ENCODE measurements at regions of chr11 and their contacts with region 1.

Region 1: DNA sequence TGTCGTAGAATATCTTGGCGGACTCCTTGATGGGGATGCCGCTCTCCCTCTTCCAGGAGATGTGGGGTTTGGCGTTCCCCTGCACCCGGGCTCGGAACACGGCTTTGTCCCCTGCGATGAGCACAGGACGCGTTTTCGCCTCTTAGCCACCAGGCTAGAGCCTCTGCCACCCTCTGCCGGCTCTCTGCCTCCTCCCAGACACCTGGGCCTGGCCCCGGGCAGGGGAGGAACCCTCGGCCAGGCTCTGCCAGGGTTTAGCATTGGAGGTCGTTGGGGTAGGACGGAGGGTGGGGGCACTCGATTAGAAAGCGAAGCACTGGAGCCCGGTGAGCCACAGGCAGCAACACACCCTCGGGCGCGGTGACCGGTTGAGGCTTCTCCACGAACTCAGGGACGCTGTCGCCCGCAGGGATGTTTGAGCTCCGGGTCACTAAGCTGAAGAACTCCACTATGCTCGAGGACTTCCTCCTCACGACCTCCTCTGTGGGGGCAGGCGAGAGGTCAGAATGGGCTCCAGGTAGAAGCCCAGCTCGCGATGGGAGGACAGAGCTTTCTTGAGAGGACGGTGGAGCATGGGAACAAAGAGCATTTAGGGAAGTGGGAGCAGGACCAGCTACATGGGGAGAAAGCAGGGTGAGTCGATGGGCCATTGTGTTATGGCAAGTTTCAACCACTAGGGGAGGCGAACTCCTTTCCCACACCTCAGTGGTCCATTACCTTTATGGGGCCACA is 4.3 kb downstream of the IGSF22 start:
- DNase-seq: no peak
- ATAC-seq: peak; percentile 91
- H3K4me3 ChIP-seq: peak overlapping the region; percentile 71
- H3K27ac ChIP-seq: no peak overlapping the region
- H3K4me1 ChIP-seq: peaks cover 9% of the 10 kb centered on the region
- H3K27me3 ChIP-seq: no peaks in the 10 kb centered on the region; a peak in 3 of 4 replicates
- CTCF ChIP-seq: peak; percentile 78 to 92 (median 87)
- EP300 ChIP-seq: no peak
- POLR2A ChIP-seq: no peak
- RAD21 ChIP-seq: peak; percentile 35

Region 2: GRCh38 chr11:18634140-18635032 is 87.3 kb before region 1 on chr11 and contains the start of gene SPTY2D1:
- CTCF ChIA-PET with region 1: interaction called, 11 read pairs
- POLR2A ChIA-PET with region 1: no interaction called
- RAD21 ChIA-PET with region 1: interaction called, 9 read pairs
- SMC1A ChIA-PET with region 1: no interaction called
- in situ Hi-C with region 1: no loop called
- intact Hi-C with region 1: no loop called
- DNase-seq: peak; percentile 93
- ATAC-seq: peak; percentile 96
- H3K4me3 ChIP-seq: peak within 1 kb of the TSS; percentile 99
- H3K27ac ChIP-seq: peak within 1 kb of the TSS; percentile 89
- H3K4me1 ChIP-seq: peaks cover 7% of the 10 kb centered on the region
- H3K27me3 ChIP-seq: no peaks in the 10 kb centered on the region
- CTCF ChIP-seq: no peak
- EP300 ChIP-seq: no peak; a peak in 1 of 4 replicates
- POLR2A ChIP-seq: peak; percentile 97
- RAD21 ChIP-seq: no peak
- polyA plus RNA-seq, gene SPTY2D1: 4.6 to 4.7 TPM

Region 3: DNA sequence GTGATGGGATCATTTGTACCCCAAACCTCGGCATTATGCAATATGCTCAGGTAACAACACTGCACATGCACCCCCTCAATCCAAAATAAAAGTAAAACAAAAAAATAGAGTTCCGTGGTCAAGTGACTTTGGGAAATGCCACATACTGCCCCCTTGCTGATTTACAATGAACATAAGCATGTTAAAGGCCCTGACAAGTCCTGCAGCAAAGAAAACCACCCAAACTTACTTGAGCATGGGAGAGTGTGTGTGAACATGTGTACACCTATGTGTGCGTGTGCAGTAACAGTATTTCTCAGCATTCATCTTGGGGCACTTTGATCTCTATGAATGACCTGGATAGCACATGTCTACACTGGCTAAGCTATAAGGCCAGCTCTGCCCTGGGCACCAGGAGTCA is 20.1 kb after region 1 on chr11:
- CTCF ChIA-PET with region 1: interaction called, 60 read pairs
- POLR2A ChIA-PET with region 1: no interaction called
- RAD21 ChIA-PET with region 1: interaction called, 6 read pairs
- SMC1A ChIA-PET with region 1: interaction called, 4 read pairs
- in situ Hi-C with region 1: no loop called
- intact Hi-C with region 1: no loop called
- DNase-seq: no peak
- ATAC-seq: no peak
- H3K4me3 ChIP-seq: no peak overlapping the region
- H3K27ac ChIP-seq: no peak overlapping the region
- H3K4me1 ChIP-seq: no peaks in the 10 kb centered on the region
- H3K27me3 ChIP-seq: no peaks in the 10 kb centered on the region
- CTCF ChIP-seq: 0 out of 6 replicates have a peak, but pooled peaks of 1 of the 3 experiments have one; percentile 7
- EP300 ChIP-seq: no peak
- POLR2A ChIP-seq: no peak
- RAD21 ChIP-seq: no peak

Region 4: GRCh38 chr11:18757811-18758210 is 36.1 kb after region 1 on chr11:
- CTCF ChIA-PET with region 1: interaction called, 131 read pairs
- POLR2A ChIA-PET with region 1: interaction called, 5 read pairs
- RAD21 ChIA-PET with region 1: interaction called, 5 read pairs
- SMC1A ChIA-PET with region 1: interaction called, 15 read pairs
- in situ Hi-C with region 1: no loop called
- intact Hi-C with region 1: loop called (anchors 5 kb)
- DNase-seq: no peak
- ATAC-seq: no peak
- H3K4me3 ChIP-seq: no peak overlapping the region
- H3K27ac ChIP-seq: no peak overlapping the region
- H3K4me1 ChIP-seq: no peaks in the 10 kb centered on the region
- H3K27me3 ChIP-seq: no peaks in the 10 kb centered on the region; a peak in 2 of 4 replicates
- CTCF ChIP-seq: no peak
- EP300 ChIP-seq: no peak
- POLR2A ChIP-seq: no peak
- RAD21 ChIP-seq: no peak

Region 5: GRCh38 chr11:18775492-18776292 is 54.0 kb after region 1 on chr11:
- CTCF ChIA-PET with region 1: interaction called, 30 read pairs
- POLR2A ChIA-PET with region 1: no interaction called
- RAD21 ChIA-PET with region 1: interaction called, 13 read pairs
- SMC1A ChIA-PET with region 1: interaction called, 14 read pairs
- in situ Hi-C with region 1: no loop called
- intact Hi-C with region 1: no loop called
- DNase-seq: no peak
- ATAC-seq: peak; percentile 94
- H3K4me3 ChIP-seq: no peak overlapping the region
- H3K27ac ChIP-seq: no peak overlapping the region
- H3K4me1 ChIP-seq: peaks cover 5% of the 10 kb centered on the region
- H3K27me3 ChIP-seq: no peaks in the 10 kb centered on the region; a peak in 1 of 4 replicates
- CTCF ChIP-seq: peak; percentile 81 to 92 (median 92)
- EP300 ChIP-seq: no peak
- POLR2A ChIP-seq: no peak
- RAD21 ChIP-seq: peak; percentile 70

Region 6: DNA sequence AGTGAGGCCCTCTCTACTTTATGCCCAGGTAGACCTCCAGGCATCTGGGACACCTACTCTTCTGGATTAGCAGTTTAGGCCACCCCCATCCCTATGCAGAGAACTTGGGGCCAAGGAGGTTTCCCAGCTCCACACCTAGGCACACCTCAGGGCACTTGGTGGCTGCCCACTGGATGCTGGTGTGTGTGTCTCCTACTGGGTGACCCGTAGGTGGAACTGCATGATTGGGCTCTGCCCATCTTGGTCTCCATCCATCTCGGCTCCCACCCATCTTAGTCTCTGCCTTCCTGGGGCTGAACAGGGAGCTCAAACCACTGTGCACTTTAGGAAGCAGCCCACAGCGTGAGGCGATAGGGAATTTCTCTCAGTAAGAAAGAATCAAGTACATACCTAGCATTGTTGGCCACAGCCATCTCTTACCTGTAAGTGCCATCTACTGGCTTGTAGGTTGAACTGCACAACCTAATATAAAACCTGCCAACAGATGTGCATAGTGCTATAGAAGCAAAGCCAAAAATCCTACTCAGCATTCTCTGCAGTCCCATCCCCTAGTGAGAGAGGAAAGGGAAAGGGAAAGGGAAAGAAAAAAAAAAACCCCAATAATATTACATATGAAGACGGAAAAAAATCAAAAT is 131.5 kb after region 1 on chr11:
- CTCF ChIA-PET with region 1: interaction called, 13 read pairs
- POLR2A ChIA-PET with region 1: no interaction called
- RAD21 ChIA-PET with region 1: no interaction called
- SMC1A ChIA-PET with region 1: interaction called, 3 read pairs
- in situ Hi-C with region 1: no loop called
- intact Hi-C with region 1: no loop called
- DNase-seq: no peak
- ATAC-seq: peak; percentile 97
- H3K4me3 ChIP-seq: no peak overlapping the region
- H3K27ac ChIP-seq: no peak overlapping the region
- H3K4me1 ChIP-seq: no peaks in the 10 kb centered on the region
- H3K27me3 ChIP-seq: no peaks in the 10 kb centered on the region
- CTCF ChIP-seq: peak; percentile 61 to 76 (median 65)
- EP300 ChIP-seq: no peak
- POLR2A ChIP-seq: no peak
- RAD21 ChIP-seq: peak; percentile 65

Region 7: DNA sequence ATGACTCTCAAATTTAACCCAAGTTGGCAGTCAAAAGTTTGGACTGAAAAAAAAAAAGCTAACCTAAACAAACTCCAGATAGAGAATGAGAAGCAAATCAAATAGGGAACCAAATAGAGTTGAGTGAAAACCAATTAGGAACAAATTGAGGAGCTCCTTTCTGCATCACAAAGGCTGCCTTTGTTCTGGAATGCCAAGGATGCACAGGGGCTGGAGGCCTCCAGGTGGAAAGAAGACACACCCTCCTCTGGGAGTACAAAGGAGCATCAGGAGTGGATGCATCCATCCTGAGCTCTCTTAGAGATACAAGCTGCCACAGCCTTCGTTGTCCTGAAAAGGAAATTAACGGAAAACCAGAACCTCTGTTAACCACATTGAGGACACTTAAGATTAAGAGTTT is 144.2 kb after region 1 on chr11:
- CTCF ChIA-PET with region 1: no interaction called
- POLR2A ChIA-PET with region 1: no interaction called
- RAD21 ChIA-PET with region 1: no interaction called
- SMC1A ChIA-PET with region 1: no interaction called
- in situ Hi-C with region 1: no loop called
- intact Hi-C with region 1: no loop called
- DNase-seq: no peak
- ATAC-seq: no peak
- H3K4me3 ChIP-seq: no peak overlapping the region
- H3K27ac ChIP-seq: no peak overlapping the region
- H3K4me1 ChIP-seq: no peaks in the 10 kb centered on the region
- H3K27me3 ChIP-seq: no peaks in the 10 kb centered on the region; a peak in 1 of 4 replicates
- CTCF ChIP-seq: no peak
- EP300 ChIP-seq: no peak
- POLR2A ChIP-seq: no peak
- RAD21 ChIP-seq: no peak

Region 8: DNA sequence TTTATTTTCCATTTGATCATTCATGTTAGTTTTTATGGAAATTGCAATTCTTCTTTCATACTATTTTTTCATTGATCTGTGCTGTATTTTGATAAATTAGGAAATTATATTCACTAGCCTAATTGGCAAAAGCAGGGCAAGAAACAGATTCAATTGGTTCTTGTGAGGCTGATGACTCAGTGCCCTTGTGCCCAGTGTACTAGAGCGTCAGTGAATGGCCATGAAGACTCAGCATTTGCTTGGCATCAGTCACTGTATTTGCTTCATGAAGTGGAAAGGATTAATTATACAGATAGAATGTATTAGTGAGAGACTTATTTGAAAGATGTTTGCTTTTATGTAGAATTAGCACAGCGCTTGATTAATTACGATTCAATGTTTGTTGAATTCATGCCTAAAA is 185.7 kb after region 1 on chr11:
- CTCF ChIA-PET with region 1: no interaction called
- POLR2A ChIA-PET with region 1: no interaction called
- RAD21 ChIA-PET with region 1: no interaction called
- SMC1A ChIA-PET with region 1: no interaction called
- in situ Hi-C with region 1: no loop called
- intact Hi-C with region 1: no loop called
- DNase-seq: no peak
- ATAC-seq: no peak
- H3K4me3 ChIP-seq: no peak overlapping the region
- H3K27ac ChIP-seq: no peak overlapping the region
- H3K4me1 ChIP-seq: no peaks in the 10 kb centered on the region
- H3K27me3 ChIP-seq: no peaks in the 10 kb centered on the region
- CTCF ChIP-seq: no peak
- EP300 ChIP-seq: no peak
- POLR2A ChIP-seq: no peak
- RAD21 ChIP-seq: no peak

Measured in GM12878 (cell line).